ENCODE measurements at regions of chr6 and their contacts with region 1.

Region 1: DNA sequence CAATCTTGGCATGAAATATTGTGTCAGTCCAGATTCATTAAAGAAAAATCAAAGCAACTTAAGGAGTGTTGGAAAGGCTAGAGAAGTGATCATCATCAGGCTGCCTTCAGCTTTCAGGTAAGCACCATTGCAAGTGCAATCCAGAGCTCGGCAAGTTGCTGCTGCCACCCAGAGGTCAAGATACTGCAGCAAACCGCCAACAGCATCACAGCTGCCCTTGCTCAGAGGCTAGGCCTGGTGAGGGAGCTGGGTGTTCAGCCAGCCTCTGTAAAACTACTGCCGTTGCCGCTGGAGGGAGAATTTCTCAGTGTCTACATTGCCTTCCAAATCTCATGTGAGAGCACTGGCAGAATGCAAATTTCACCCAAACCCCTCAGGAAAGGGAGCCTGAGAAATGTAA is 5.8 kb upstream of the SYNE1 start:
- DNase-seq: no peak
- H3K4me3 ChIP-seq: no peak overlapping the region
- H3K4me3 Mint-ChIP-seq: no peak overlapping the region
- H3K27ac ChIP-seq: no peak overlapping the region
- H3K27ac Mint-ChIP-seq: no peak overlapping the region
- H3K4me1 ChIP-seq: no peaks in the 10 kb centered on the region
- H3K4me1 Mint-ChIP-seq: peaks cover 0 to 2% (median 0%) of the 10 kb centered on the region in 4 donors
- H3K27me3 ChIP-seq: no peaks in the 10 kb centered on the region
- H3K27me3 Mint-ChIP-seq: peaks cover 7 to 11% of the 10 kb centered on the region in 2 donors

Region 2: GRCh38 chr6:152552616-152553209 is 90.3 kb before region 1 on chr6:
- CTCF ChIA-PET with region 1: interaction called, 10 read pairs
- POLR2A ChIA-PET with region 1: no interaction called
- intact Hi-C with region 1: no loop called
- DNase-seq: peak in 1 of 5 donors; percentile 10
- H3K4me3 ChIP-seq: no peak overlapping the region
- H3K4me3 Mint-ChIP-seq: no peak overlapping the region
- H3K27ac ChIP-seq: no peak overlapping the region
- H3K27ac Mint-ChIP-seq: no peak overlapping the region
- H3K4me1 ChIP-seq: no peaks in the 10 kb centered on the region
- H3K4me1 Mint-ChIP-seq: no peaks in the 10 kb centered on the region
- H3K27me3 ChIP-seq: no peaks in the 10 kb centered on the region
- H3K27me3 Mint-ChIP-seq: peaks cover 0 to 8% of the 10 kb centered on the region in 2 donors

Region 3: DNA sequence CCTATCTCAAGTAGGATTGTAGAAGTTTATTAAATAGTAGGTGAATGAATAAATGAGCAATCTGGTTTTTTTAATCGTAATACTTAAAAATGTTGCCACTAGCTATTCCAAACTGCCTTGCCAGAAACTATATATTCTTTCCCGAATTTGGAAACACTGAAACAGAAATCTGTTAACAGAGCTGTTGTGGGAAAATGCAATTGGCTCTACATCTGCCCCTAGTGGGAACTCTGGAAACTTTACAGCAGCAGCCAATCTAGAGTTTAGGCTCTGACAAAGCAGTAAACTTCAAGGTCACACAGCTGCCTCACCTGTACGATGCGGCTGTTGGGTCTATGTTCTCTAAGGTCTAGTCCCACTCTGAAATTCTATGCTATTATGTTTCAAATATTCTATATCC is 47.5 kb before region 1 on chr6:
- CTCF ChIA-PET with region 1: no interaction called
- POLR2A ChIA-PET with region 1: no interaction called
- intact Hi-C with region 1: no loop called
- DNase-seq: no peak
- H3K4me3 ChIP-seq: no peak overlapping the region
- H3K4me3 Mint-ChIP-seq: no peak overlapping the region
- H3K27ac ChIP-seq: no peak overlapping the region
- H3K27ac Mint-ChIP-seq: no peak overlapping the region
- H3K4me1 ChIP-seq: no peaks in the 10 kb centered on the region
- H3K4me1 Mint-ChIP-seq: no peaks in the 10 kb centered on the region
- H3K27me3 ChIP-seq: no peaks in the 10 kb centered on the region
- H3K27me3 Mint-ChIP-seq: peaks cover 1 to 2% of the 10 kb centered on the region in 2 donors

Region 4: DNA sequence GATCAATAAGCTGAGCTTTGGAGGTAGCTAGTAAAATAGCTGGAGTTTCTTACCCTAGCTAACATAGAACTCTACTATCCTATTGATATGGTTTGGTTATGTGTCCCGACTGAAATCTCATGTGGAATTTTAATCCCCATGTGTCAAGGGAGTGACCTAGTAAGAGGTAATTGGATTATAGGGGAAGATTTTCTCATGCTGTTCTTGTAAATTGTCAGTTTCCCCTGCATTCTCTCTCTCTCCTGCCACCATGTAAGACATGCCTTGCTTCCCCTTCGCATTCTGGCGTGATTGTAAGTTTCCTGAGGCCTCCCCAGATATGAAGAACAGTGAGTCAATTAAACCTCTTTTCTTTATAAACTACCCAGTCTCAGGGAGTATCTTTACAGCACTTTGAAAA is 18.8 kb after region 1 on chr6:
- CTCF ChIA-PET with region 1: no interaction called
- POLR2A ChIA-PET with region 1: no interaction called
- intact Hi-C with region 1: no loop called
- DNase-seq: no peak
- H3K4me3 ChIP-seq: no peak overlapping the region
- H3K4me3 Mint-ChIP-seq: no peak overlapping the region
- H3K27ac ChIP-seq: no peak overlapping the region
- H3K27ac Mint-ChIP-seq: no peak overlapping the region
- H3K4me1 ChIP-seq: no peaks in the 10 kb centered on the region
- H3K4me1 Mint-ChIP-seq: no peaks in the 10 kb centered on the region
- H3K27me3 ChIP-seq: no peaks in the 10 kb centered on the region
- H3K27me3 Mint-ChIP-seq: peaks cover 0 to 1% of the 10 kb centered on the region in 2 donors

Measured in CD4-positive, alpha-beta memory T cell (primary cell).